Caco-2 (cell line): ENCODE measurements at regions of chr6 and their contacts with region 1.

Region 1: DNA sequence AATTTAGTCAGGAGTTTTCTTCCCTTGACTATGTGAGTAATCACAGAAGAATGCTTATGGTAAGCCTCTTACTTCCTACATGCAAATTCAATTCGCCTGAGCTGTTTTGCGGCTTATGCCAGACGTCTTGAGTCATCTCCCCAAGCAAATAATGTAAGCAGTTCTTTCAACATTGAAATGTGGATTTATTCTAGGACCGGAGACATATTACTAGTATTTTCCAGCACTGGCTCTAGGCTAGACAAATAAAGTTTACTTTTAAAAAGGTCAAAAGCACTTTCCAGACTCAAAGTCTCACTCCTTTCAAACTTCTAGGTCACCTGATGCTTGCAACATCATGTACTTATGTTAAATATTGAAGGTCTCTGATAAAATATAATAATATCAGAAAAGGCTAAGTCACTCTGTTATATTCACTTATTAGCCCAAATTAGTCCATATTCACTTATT is 38.1 kb upstream of the NOX3 start:
- DNase-seq: peak; percentile 40 to 48
- H3K4me3 ChIP-seq: no peak overlapping the region
- H3K4me3 Mint-ChIP-seq: no peak overlapping the region
- H3K27ac Mint-ChIP-seq: peak overlapping the region; percentile 11
- H3K4me1 ChIP-seq: peaks cover 24% of the 10 kb centered on the region
- H3K4me1 Mint-ChIP-seq: peaks cover 20% of the 10 kb centered on the region
- H3K27me3 ChIP-seq: no peaks in the 10 kb centered on the region
- H3K27me3 Mint-ChIP-seq: no peaks in the 10 kb centered on the region
- CTCF ChIP-seq: no peak

Region 2: GRCh38 chr6:155340464-155341129 is 153.1 kb before region 1 on chr6:
- CTCF ChIA-PET with region 1: interaction called, 7 read pairs
- POLR2A ChIA-PET with region 1: no interaction called
- intact Hi-C with region 1: loop called (anchors 1 kb)
- DNase-seq: no peak
- H3K4me3 ChIP-seq: no peak overlapping the region
- H3K4me3 Mint-ChIP-seq: no peak overlapping the region
- H3K27ac Mint-ChIP-seq: no peak overlapping the region
- H3K4me1 ChIP-seq: peaks cover 8% of the 10 kb centered on the region
- H3K4me1 Mint-ChIP-seq: peaks cover 16% of the 10 kb centered on the region
- H3K27me3 ChIP-seq: no peaks in the 10 kb centered on the region
- H3K27me3 Mint-ChIP-seq: no peaks in the 10 kb centered on the region
- CTCF ChIP-seq: no peak

Region 3: GRCh38 chr6:155380666-155381332 is 112.9 kb before region 1 on chr6:
- CTCF ChIA-PET with region 1: interaction called, 4 read pairs
- POLR2A ChIA-PET with region 1: no interaction called
- intact Hi-C with region 1: loop called (anchors 1 kb)
- DNase-seq: no peak
- H3K4me3 ChIP-seq: no peak overlapping the region
- H3K4me3 Mint-ChIP-seq: no peak overlapping the region
- H3K27ac Mint-ChIP-seq: no peak overlapping the region
- H3K4me1 ChIP-seq: no peaks in the 10 kb centered on the region
- H3K4me1 Mint-ChIP-seq: no peaks in the 10 kb centered on the region
- H3K27me3 ChIP-seq: no peaks in the 10 kb centered on the region
- H3K27me3 Mint-ChIP-seq: no peaks in the 10 kb centered on the region
- CTCF ChIP-seq: no peak

Region 4: GRCh38 chr6:155399062-155399744 is 94.5 kb before region 1 on chr6:
- CTCF ChIA-PET with region 1: no interaction called
- POLR2A ChIA-PET with region 1: no interaction called
- intact Hi-C with region 1: loop called (anchors 1 kb)
- DNase-seq: peak; percentile 70 to 85
- H3K4me3 ChIP-seq: no peak overlapping the region
- H3K4me3 Mint-ChIP-seq: no peak overlapping the region
- H3K27ac Mint-ChIP-seq: peak overlapping the region; percentile 80
- H3K4me1 ChIP-seq: peaks cover 26% of the 10 kb centered on the region
- H3K4me1 Mint-ChIP-seq: peaks cover 26% of the 10 kb centered on the region
- H3K27me3 ChIP-seq: no peaks in the 10 kb centered on the region
- H3K27me3 Mint-ChIP-seq: no peaks in the 10 kb centered on the region
- CTCF ChIP-seq: no peak

Region 5: DNA sequence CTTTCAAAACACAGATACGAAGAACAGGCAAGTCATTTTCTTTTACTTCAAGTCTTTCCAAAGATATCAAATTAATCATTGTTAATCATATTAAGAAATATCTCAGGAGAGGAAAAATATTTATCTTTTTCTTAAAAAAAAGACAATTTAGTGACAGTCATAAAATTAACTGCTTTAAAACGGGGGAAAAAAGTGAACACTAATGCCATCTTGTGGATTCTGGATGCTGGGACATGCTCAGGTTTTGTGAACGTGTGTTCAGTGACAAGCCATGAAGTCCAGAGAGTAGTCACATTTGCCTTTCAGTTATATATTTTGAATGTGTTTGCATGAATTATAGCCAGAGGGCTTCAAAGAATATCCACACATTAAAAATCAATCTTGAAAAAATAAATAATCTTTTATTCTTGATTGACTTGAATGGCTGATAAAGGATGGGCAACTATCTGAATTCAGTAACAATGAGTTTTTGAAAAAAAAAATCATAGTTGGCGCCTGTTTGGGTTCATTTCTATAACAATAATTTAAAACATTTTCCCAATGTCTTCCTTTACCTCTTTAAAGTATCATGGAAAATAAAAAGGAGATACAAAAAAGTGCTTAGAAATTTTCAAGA is 36.6 kb after region 1 on chr6:
- CTCF ChIA-PET with region 1: no interaction called
- POLR2A ChIA-PET with region 1: no interaction called
- intact Hi-C with region 1: loop called (anchors 2 kb)
- DNase-seq: peak in 1 of 2 experiments; percentile 36
- H3K4me3 ChIP-seq: no peak overlapping the region
- H3K4me3 Mint-ChIP-seq: no peak overlapping the region
- H3K27ac Mint-ChIP-seq: no peak overlapping the region
- H3K4me1 ChIP-seq: peaks cover 9% of the 10 kb centered on the region
- H3K4me1 Mint-ChIP-seq: no peaks in the 10 kb centered on the region
- H3K27me3 ChIP-seq: no peaks in the 10 kb centered on the region
- H3K27me3 Mint-ChIP-seq: no peaks in the 10 kb centered on the region
- CTCF ChIP-seq: peak; percentile 58 to 76